CD14-positive monocyte (primary cell): ENCODE measurements at regions of chr5 and their contacts with region 1.

Region 1: DNA sequence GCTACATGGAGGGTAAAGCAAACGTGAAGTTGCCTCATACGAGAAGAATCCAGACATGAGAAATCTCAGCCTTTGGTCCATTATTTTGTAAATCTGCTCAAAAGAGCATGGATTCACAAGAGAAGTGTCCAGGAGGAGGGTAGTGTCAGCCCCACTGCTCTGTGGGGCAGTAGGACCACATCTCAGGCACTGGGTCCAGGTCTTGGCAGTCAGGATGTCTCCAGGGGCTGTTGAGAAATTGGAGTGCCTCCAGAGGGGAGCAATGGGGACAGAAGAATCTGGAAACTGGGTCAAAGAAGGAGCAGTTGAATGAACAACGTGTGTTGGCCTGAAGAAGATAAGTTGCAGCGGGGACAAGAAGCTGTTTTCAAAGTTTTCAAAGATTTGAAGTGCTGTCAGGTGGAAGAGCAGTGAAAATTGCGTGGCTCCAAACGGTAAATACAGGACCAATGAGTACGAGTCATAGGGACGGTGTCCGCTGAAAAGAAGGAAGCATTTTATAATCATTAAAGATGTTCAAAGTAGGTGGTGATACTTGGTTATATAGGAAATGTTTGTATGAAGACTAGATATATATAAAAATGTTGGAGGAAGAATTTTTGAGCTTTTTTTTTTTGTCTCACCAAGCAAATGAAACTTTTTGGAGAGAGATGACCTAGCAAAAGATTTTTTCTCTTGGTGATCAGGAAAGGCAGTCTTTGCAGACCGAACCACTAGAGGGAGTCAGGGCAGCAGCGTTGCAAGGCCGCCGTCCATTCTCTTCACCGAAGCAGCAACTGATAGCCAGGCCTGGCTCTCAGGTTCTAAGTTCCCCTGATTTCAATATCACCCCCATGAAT is 57.1 kb upstream of the ZBED3 start:
- DNase-seq: peak; percentile 51 to 68 (median 66)
- H3K4me3 ChIP-seq: no peak overlapping the region
- H3K4me3 Mint-ChIP-seq: no peak overlapping the region
- H3K27ac ChIP-seq: no peak overlapping the region
- H3K27ac Mint-ChIP-seq: peak overlapping the region in 2 of 7 donors; percentile 10 to 72
- H3K4me1 ChIP-seq: peaks cover 20 to 22% of the 10 kb centered on the region in 2 donors
- H3K4me1 Mint-ChIP-seq: peaks cover 34% of the 10 kb centered on the region
- H3K27me3 ChIP-seq: no peaks in the 10 kb centered on the region
- H3K27me3 Mint-ChIP-seq: peaks cover 0 to 2% (median 0%) of the 10 kb centered on the region in 3 donors
- CTCF ChIP-seq: peak; percentile 90

Region 2: DNA sequence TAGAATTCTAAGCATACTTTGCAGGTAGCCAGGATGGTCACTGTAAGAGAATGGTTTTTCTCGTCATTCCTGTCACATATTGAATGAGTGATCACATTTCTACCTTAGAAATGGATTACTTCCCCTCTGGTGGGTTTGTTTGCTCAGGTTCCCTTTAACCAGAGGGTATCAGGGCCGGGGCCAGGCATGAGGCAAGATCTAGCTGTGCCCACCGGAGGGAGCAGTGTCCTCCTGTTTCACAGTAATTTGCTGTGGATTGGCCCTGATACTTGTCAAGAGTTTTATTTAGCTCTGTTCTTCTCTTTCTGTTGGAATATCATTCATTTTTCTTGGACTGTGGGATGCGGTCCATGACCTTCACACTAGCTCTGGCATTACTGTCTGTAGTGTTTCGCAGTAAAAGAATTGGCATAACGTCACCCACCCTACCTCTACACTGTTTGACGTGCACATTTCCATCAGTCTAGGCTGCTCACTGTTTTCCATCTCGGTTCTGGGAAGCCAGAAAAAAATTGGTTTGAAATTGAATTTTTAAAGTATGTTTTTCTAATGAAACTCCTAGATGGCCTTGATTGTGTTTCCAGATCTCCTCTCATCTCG is 14.7 kb before region 1 on chr5:
- intact Hi-C with region 1: no loop called
- DNase-seq: no peak
- H3K4me3 ChIP-seq: no peak overlapping the region
- H3K4me3 Mint-ChIP-seq: no peak overlapping the region
- H3K27ac ChIP-seq: no peak overlapping the region
- H3K27ac Mint-ChIP-seq: no peak overlapping the region
- H3K4me1 ChIP-seq: no peaks in the 10 kb centered on the region
- H3K4me1 Mint-ChIP-seq: no peaks in the 10 kb centered on the region
- H3K27me3 ChIP-seq: no peaks in the 10 kb centered on the region
- H3K27me3 Mint-ChIP-seq: no peaks in the 10 kb centered on the region
- CTCF ChIP-seq: no peak

Region 3: GRCh38 chr5:77491783-77492652 is 347.8 kb after region 1 on chr5 and contains the start of gene WDR41:
- intact Hi-C with region 1: loop called (anchors 5 to 10 kb)
- DNase-seq: peak; percentile 77 to 85 (median 80)
- H3K4me3 ChIP-seq: peak within 1 kb of the TSS; percentile 87 to 95 (median 90)
- H3K4me3 Mint-ChIP-seq: peak within 1 kb of the TSS; percentile 98 to 99
- H3K27ac ChIP-seq: peak within 1 kb of the TSS; percentile 89 to 95
- H3K27ac Mint-ChIP-seq: peak within 1 kb of the TSS; percentile 86 to 98 (median 94)
- H3K4me1 ChIP-seq: peaks cover 12 to 13% of the 10 kb centered on the region in 2 donors
- H3K4me1 Mint-ChIP-seq: peaks cover 26% of the 10 kb centered on the region
- H3K27me3 ChIP-seq: no peaks in the 10 kb centered on the region
- H3K27me3 Mint-ChIP-seq: no peaks in the 10 kb centered on the region
- CTCF ChIP-seq: peak; percentile 96
- polyA plus RNA-seq, gene WDR41: 19.6 to 64.0 (median 47.5) TPM